ENCODE measurements at regions of chr6 and their contacts with region 1.

Region 1: GRCh38 chr6:130215526-130215925 is 7.2 kb downstream of the SAMD3 start:
- DNase-seq: peak; percentile 61
- H3K4me3 Mint-ChIP-seq: peak overlapping the region; percentile 64
- H3K27ac Mint-ChIP-seq: peak overlapping the region; percentile 77
- H3K4me1 Mint-ChIP-seq: peaks cover 71% of the 10 kb centered on the region
- H3K27me3 Mint-ChIP-seq: no peaks in the 10 kb centered on the region

Region 2: GRCh38 chr6:130115036-130115435 is 100.5 kb before region 1 on chr6:
- CTCF ChIA-PET with region 1: no interaction called
- POLR2A ChIA-PET with region 1: no interaction called
- DNase-seq: no peak
- H3K4me3 Mint-ChIP-seq: no peak overlapping the region
- H3K27ac Mint-ChIP-seq: no peak overlapping the region
- H3K4me1 Mint-ChIP-seq: no peaks in the 10 kb centered on the region
- H3K27me3 Mint-ChIP-seq: no peaks in the 10 kb centered on the region

Region 3: GRCh38 chr6:130202782-130203181 is 12.7 kb before region 1 on chr6:
- CTCF ChIA-PET with region 1: no interaction called
- POLR2A ChIA-PET with region 1: interaction called, 10 read pairs
- DNase-seq: no peak
- H3K4me3 Mint-ChIP-seq: no peak overlapping the region
- H3K27ac Mint-ChIP-seq: no peak overlapping the region
- H3K4me1 Mint-ChIP-seq: peaks cover 16% of the 10 kb centered on the region
- H3K27me3 Mint-ChIP-seq: no peaks in the 10 kb centered on the region